ENCODE measurements at regions of chr1 and their contacts with region 1.

Region 1: GRCh38 chr1:165827268-165828102 is at the start of gene UCK2:
- DNase-seq: peak; percentile 82
- ATAC-seq: peak; percentile 86
- total RNA-seq, gene UCK2: 28.1 TPM

Region 2: DNA sequence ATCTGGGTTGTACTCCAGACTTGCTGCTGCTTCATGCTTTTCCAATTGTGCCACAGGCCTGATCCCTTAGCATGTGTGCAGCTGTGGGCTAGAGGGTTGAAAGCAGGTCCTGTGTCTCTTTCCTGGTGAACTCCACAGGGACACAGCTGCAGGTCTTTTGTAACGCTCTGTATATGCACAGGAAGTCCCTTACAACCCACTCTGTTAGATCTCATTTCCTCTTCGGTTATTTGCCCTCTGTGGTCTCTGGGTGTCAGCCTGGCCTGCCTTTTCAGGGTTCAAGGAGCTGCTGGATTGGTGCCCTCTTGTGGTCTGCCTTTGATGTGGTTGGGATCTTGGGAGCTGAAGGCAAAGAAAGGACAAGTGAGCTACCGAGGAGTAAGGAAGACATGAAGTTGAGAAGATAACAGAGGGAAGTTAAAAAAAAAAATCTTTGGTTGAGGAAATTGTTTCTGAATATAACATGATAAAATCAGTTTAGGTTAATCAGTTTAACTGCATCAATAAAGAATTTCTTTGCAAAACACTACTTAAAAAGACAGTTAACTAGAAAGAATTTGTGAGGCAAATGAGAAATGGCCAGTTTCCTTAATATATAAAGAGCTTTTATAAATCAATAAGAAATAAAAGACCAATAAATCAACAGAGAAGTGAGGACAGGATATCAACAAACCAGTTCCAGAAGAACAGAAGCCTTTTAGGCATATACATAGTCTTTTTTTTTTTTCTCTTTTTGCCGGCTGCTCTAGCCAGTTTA is 44.0 kb after region 1 on chr1:
- intact Hi-C with region 1: no loop called
- DNase-seq: no peak
- ATAC-seq: peak; percentile 62

Region 3: GRCh38 chr1:165894591-165894990 is 67.1 kb after region 1 on chr1:
- intact Hi-C with region 1: loop called (anchors 5 kb)
- DNase-seq: no peak
- ATAC-seq: no peak